CD8-positive, alpha-beta T cell (primary cell): ENCODE measurements at regions of chr18 and their contacts with region 1.

Region 1: GRCh38 chr18:79068937-79069791 is at the start of gene ATP9B:
- DNase-seq: peak; percentile 96 to 99 (median 98)
- ATAC-seq: peak; percentile 81
- H3K4me3 ChIP-seq: peak within 1 kb of the TSS; percentile 76 to 93
- H3K4me3 Mint-ChIP-seq: peak within 1 kb of the TSS; percentile 93
- H3K27ac ChIP-seq: peak within 1 kb of the TSS; percentile 96 to 98
- H3K27ac Mint-ChIP-seq: peak within 1 kb of the TSS; percentile 100
- H3K4me1 ChIP-seq: peaks cover 29% of the 10 kb centered on the region
- H3K4me1 Mint-ChIP-seq: peaks cover 51% of the 10 kb centered on the region
- H3K27me3 ChIP-seq: no peaks in the 10 kb centered on the region
- H3K27me3 Mint-ChIP-seq: peaks cover 2% of the 10 kb centered on the region
- CTCF ChIP-seq: no peak
- total RNA-seq, gene ATP9B: 60.8 to 61.1 TPM

Region 2: DNA sequence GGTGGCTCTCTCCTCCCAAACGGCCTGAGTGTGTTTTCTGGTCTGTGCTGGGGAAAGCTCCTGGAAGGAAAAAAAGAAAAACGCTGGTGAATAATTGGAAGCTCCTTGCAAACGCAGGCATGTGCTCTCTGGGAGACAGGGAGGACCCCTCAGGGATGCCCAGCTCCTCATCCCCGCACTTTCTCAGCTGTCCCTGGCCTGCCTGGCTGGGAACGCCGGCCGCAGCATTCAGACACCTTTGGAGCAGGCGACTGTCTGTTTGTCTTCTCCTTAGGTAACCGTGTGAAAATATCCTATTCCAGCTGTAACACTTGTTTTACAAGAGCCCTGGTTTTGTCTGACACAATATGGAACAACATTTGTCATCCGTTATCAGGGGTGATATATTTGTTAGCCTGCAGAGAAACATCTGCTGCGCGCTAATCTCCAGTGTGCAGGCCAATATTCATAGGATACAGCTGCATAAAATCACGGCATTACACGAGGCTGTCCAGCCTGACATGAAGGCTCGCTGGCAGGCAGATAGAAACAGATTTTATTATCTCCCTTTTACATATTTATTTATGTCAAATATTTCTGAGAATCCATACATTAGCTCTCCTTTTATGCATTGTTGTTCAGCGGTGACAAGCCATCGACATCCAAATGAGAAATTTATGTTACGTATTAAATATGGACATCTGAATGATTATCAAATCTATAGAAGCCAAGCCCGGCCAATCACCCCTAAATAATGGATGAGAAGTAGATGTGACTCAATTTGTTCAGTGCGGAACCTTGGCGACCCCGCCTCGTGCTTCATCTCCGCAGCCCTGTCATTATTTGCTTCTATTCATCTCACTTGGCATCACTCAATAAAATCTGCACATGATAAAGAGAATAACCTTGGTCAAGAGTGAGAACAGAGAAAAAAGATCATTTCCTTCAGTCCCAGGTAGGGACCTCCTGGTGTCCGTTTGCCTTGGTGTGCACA is 764.7 kb before region 1 on chr18:
- CTCF ChIA-PET with region 1: no interaction called
- POLR2A ChIA-PET with region 1: no interaction called
- intact Hi-C with region 1: no loop called
- DNase-seq: no peak
- ATAC-seq: no peak
- H3K4me3 ChIP-seq: no peak overlapping the region
- H3K4me3 Mint-ChIP-seq: no peak overlapping the region
- H3K27ac ChIP-seq: no peak overlapping the region
- H3K27ac Mint-ChIP-seq: no peak overlapping the region
- H3K4me1 ChIP-seq: no peaks in the 10 kb centered on the region
- H3K4me1 Mint-ChIP-seq: no peaks in the 10 kb centered on the region
- H3K27me3 ChIP-seq: no peaks in the 10 kb centered on the region
- H3K27me3 Mint-ChIP-seq: no peaks in the 10 kb centered on the region
- CTCF ChIP-seq: no peak

Region 3: GRCh38 chr18:79139206-79139605 is 70.0 kb after region 1 on chr18:
- CTCF ChIA-PET with region 1: no interaction called
- POLR2A ChIA-PET with region 1: no interaction called
- intact Hi-C with region 1: loop called in 1 of 2 experiments (anchors 5 kb)
- DNase-seq: peak in 8 of 9 experiments; percentile 16 to 77 (median 53)
- ATAC-seq: peak; percentile 92
- H3K4me3 ChIP-seq: no peak overlapping the region
- H3K4me3 Mint-ChIP-seq: no peak overlapping the region
- H3K27ac ChIP-seq: no peak overlapping the region
- H3K27ac Mint-ChIP-seq: no peak overlapping the region
- H3K4me1 ChIP-seq: peaks cover 5% of the 10 kb centered on the region
- H3K4me1 Mint-ChIP-seq: peaks cover 25% of the 10 kb centered on the region
- H3K27me3 ChIP-seq: no peaks in the 10 kb centered on the region
- H3K27me3 Mint-ChIP-seq: no peaks in the 10 kb centered on the region
- CTCF ChIP-seq: no peak

Region 4: DNA sequence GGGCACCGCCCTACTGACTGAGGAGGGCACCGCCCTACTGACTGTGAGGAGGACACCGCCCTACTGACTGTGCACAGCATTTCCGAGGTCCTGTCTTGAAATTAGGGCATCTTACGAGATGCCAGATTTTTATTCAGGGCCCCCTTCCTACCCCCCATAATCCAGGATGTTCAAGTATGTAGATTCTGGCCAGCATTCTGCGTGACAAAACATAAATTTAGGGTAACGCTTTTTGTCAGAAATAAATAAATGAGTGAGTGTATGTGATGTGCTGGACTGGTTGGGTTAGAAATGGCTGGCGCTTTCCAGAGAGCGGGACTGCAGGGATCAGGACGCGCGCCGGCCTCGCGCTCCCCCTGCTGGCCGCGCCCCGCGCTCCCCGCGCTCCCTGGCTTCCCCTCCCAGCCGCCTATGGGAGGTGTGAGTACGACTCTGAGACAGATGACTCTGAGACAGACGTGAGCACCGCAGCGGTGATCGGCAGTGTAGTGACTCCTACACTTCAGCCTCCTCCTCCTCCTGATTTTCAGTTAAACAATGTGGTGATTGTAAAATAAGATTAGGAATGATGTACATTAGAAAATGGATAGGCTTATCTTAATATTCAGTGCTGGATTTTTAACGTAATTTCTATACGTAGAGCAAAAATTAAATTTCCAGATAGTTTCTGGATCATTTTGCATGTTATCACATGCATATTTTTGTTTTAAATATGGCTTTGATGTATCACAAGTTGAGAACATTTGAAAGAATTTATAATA is 177.4 kb after region 1 on chr18:
- CTCF ChIA-PET with region 1: no interaction called
- POLR2A ChIA-PET with region 1: no interaction called
- intact Hi-C with region 1: loop called in 1 of 2 experiments (anchors 5 kb)
- DNase-seq: peak; percentile 44 to 79 (median 66)
- ATAC-seq: peak; percentile 90
- H3K4me3 ChIP-seq: no peak overlapping the region
- H3K4me3 Mint-ChIP-seq: peak overlapping the region; percentile 49
- H3K27ac ChIP-seq: peak overlapping the region in 1 of 2 experiments; percentile 5
- H3K27ac Mint-ChIP-seq: peak overlapping the region; percentile 56
- H3K4me1 ChIP-seq: no peaks in the 10 kb centered on the region
- H3K4me1 Mint-ChIP-seq: peaks cover 8% of the 10 kb centered on the region
- H3K27me3 ChIP-seq: no peaks in the 10 kb centered on the region
- H3K27me3 Mint-ChIP-seq: no peaks in the 10 kb centered on the region
- CTCF ChIP-seq: peak; percentile 97

Region 5: GRCh38 chr18:79400091-79400590 is 331.0 kb after region 1 on chr18:
- CTCF ChIA-PET with region 1: no interaction called
- POLR2A ChIA-PET with region 1: no interaction called
- intact Hi-C with region 1: loop called in 1 of 2 experiments (anchors 10 kb)
- DNase-seq: peak; percentile 43 to 80 (median 72)
- ATAC-seq: peak; percentile 33
- H3K4me3 ChIP-seq: peak overlapping the region; percentile 58 to 59
- H3K4me3 Mint-ChIP-seq: peak overlapping the region; percentile 87
- H3K27ac ChIP-seq: peak overlapping the region; percentile 53 to 59
- H3K27ac Mint-ChIP-seq: no peak overlapping the region
- H3K4me1 ChIP-seq: peaks cover 54% of the 10 kb centered on the region
- H3K4me1 Mint-ChIP-seq: peaks cover 47% of the 10 kb centered on the region
- H3K27me3 ChIP-seq: peaks cover 0 to 3% of the 10 kb centered on the region in 2 experiments
- H3K27me3 Mint-ChIP-seq: no peaks in the 10 kb centered on the region
- CTCF ChIP-seq: no peak

Region 6: DNA sequence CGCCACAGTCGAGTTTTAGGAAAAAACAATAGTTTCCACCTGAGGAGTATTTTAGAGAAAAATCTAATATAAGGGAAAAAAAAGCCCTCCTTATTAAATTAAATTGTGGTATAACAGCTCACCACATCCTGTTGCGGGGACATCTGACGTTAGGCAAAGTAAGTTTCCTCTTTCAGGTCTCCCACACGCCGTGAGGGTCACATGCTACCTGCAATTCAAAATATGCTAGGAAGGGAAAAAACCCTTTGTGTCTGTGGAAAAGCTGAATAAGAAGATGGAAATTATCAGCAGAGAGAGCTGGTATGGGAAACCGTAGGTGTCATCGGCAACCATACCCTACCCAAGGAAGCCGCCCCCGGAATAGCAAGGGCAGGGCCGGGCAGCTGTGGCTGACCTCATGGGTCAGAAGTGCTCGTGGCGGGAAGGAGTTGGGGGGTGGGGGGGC is 454.6 kb after region 1 on chr18:
- CTCF ChIA-PET with region 1: no interaction called
- POLR2A ChIA-PET with region 1: interaction called, 5 read pairs
- intact Hi-C with region 1: loop called (anchors 2 to 5 kb)
- DNase-seq: peak; percentile 44 to 93 (median 73)
- ATAC-seq: peak; percentile 52
- H3K4me3 ChIP-seq: peak overlapping the region; percentile 44 to 52
- H3K4me3 Mint-ChIP-seq: peak overlapping the region; percentile 86
- H3K27ac ChIP-seq: peak overlapping the region; percentile 81
- H3K27ac Mint-ChIP-seq: peak overlapping the region; percentile 97
- H3K4me1 ChIP-seq: peaks cover 62% of the 10 kb centered on the region
- H3K4me1 Mint-ChIP-seq: peaks cover 58% of the 10 kb centered on the region
- H3K27me3 ChIP-seq: no peaks in the 10 kb centered on the region
- H3K27me3 Mint-ChIP-seq: no peaks in the 10 kb centered on the region
- CTCF ChIP-seq: no peak

Region 7: GRCh38 chr18:80108728-80109675 is 1039.8 kb after region 1 on chr18 and contains the start of gene ADNP2:
- CTCF ChIA-PET with region 1: no interaction called
- POLR2A ChIA-PET with region 1: no interaction called
- intact Hi-C with region 1: loop called in 1 of 2 experiments (anchors 5 kb)
- DNase-seq: peak; percentile 41 to 96 (median 80)
- ATAC-seq: peak; percentile 80
- H3K4me3 ChIP-seq: peak within 1 kb of the TSS; percentile 66 to 72
- H3K4me3 Mint-ChIP-seq: peak within 1 kb of the TSS; percentile 84
- H3K27ac ChIP-seq: peak within 1 kb of the TSS; percentile 90 to 94
- H3K27ac Mint-ChIP-seq: peak within 1 kb of the TSS; percentile 95
- H3K4me1 ChIP-seq: peaks cover 16% of the 10 kb centered on the region
- H3K4me1 Mint-ChIP-seq: peaks cover 42% of the 10 kb centered on the region
- H3K27me3 ChIP-seq: no peaks in the 10 kb centered on the region
- H3K27me3 Mint-ChIP-seq: no peaks in the 10 kb centered on the region
- CTCF ChIP-seq: no peak
- total RNA-seq, gene ADNP2: 96.7 to 100 TPM